ENCODE measurements at regions of chr15 and their contacts with region 1.

Region 1: GRCh38 chr15:49155110-49155833 is at the start of gene COPS2:
- DNase-seq: peak; percentile 93
- H3K4me3 Mint-ChIP-seq: peak within 1 kb of the TSS; percentile 99
- H3K27ac Mint-ChIP-seq: peak within 1 kb of the TSS; percentile 99
- H3K4me1 Mint-ChIP-seq: peaks cover 47% of the 10 kb centered on the region
- H3K27me3 Mint-ChIP-seq: peaks cover 3% of the 10 kb centered on the region
- total RNA-seq, gene COPS2: 99.7 and 105 TPM in 2 replicates

Region 2: DNA sequence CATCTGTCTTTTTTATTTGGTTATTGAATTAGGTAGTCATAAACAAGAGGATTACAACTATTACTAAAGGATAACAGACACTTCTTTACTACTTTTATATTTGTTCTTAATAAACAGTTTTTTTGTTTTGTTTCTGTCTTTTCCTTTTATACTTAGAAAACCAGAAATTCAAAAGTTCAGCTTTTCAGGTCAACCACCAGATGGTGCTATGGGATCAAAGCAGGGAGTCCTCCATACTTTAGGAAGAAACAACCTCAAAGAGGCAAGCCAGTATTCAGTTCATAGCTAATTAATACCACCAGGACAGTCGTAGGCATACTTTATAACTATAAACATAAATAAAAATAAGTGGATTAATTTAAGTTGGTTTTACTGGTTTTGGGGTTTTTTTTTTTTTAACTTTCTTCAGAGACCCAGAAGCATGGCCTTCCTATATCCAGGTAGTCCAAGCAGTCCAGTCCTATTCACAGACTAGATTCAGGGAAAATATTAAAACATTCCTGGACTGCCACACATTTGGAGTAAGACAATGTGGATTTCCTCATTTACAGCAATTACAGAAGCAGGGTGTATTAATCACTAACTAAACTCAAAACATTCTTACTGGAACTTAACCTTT is 293.4 kb before region 1 on chr15:
- intact Hi-C with region 1: loop called (anchors 2 kb)
- DNase-seq: peak; percentile 25
- H3K4me3 Mint-ChIP-seq: no peak overlapping the region
- H3K27ac Mint-ChIP-seq: no peak overlapping the region
- H3K4me1 Mint-ChIP-seq: peaks cover 27% of the 10 kb centered on the region
- H3K27me3 Mint-ChIP-seq: peaks cover 6% of the 10 kb centered on the region

Region 3: GRCh38 chr15:49046220-49047102 is 108.8 kb before region 1 on chr15 and contains the start of gene SECISBP2L:
- intact Hi-C with region 1: loop called (anchors 1 kb)
- DNase-seq: peak; percentile 87
- H3K4me3 Mint-ChIP-seq: peak within 1 kb of the TSS; percentile 96
- H3K27ac Mint-ChIP-seq: peak within 1 kb of the TSS; percentile 91
- H3K4me1 Mint-ChIP-seq: peaks cover 35% of the 10 kb centered on the region
- H3K27me3 Mint-ChIP-seq: no peaks in the 10 kb centered on the region
- total RNA-seq, gene SECISBP2L: 38.0 and 44.8 TPM in 2 replicates

Region 4: GRCh38 chr15:49421991-49422390 is 266.7 kb after region 1 on chr15:
- intact Hi-C with region 1: loop called (anchors 5 kb)
- DNase-seq: no peak
- H3K4me3 Mint-ChIP-seq: no peak overlapping the region
- H3K27ac Mint-ChIP-seq: peak overlapping the region; percentile 57
- H3K4me1 Mint-ChIP-seq: peaks cover 4% of the 10 kb centered on the region
- H3K27me3 Mint-ChIP-seq: peaks cover 6% of the 10 kb centered on the region

Region 5: GRCh38 chr15:49530106-49530505 is 374.8 kb after region 1 on chr15:
- intact Hi-C with region 1: no loop called
- DNase-seq: no peak
- H3K4me3 Mint-ChIP-seq: no peak overlapping the region
- H3K27ac Mint-ChIP-seq: no peak overlapping the region
- H3K4me1 Mint-ChIP-seq: no peaks in the 10 kb centered on the region
- H3K27me3 Mint-ChIP-seq: peaks cover 3% of the 10 kb centered on the region

Region 6: GRCh38 chr15:50424066-50424890 is 1269.0 kb after region 1 on chr15 and contains the start of gene USP8:
- intact Hi-C with region 1: loop called (anchors 10 kb)
- DNase-seq: peak; percentile 92
- H3K4me3 Mint-ChIP-seq: peak within 1 kb of the TSS; percentile 98
- H3K27ac Mint-ChIP-seq: peak within 1 kb of the TSS; percentile 92
- H3K4me1 Mint-ChIP-seq: peaks cover 25% of the 10 kb centered on the region
- H3K27me3 Mint-ChIP-seq: no peaks in the 10 kb centered on the region
- total RNA-seq, gene USP8: 66.2 and 66.3 TPM in 2 replicates

Measured in activated T-helper 1 cell treated with anti-CD3 and anti-CD28 coated beads, Interleukin-12 subunit alpha, Interleukin-12 subunit beta, Interleukin-2, Interleukin-4 antibody, amounts not matched to agents 30 ng/mL and 10 ng/mL and 1 ng/mL, durations not matched to agents 14 hours and 24 hours and 36 hours (primary cell).